A549 (cell line): ENCODE measurements at regions of chr18 and their contacts with region 1.

Region 1: GRCh38 chr18:3665780-3666525 is 216.0 kb downstream of the TGIF1 start:
- DNase-seq: peak; percentile 65 to 93
- ATAC-seq: peak; percentile 90 to 94
- H3K4me3 ChIP-seq: peak overlapping the region; percentile 14; the same call in 1 of the 3 replicates
- H3K27ac ChIP-seq: peak overlapping the region; percentile 87 to 91
- H3K4me1 ChIP-seq: peaks cover 50% of the 10 kb centered on the region
- CTCF ChIP-seq: peak; percentile 76
- EP300 ChIP-seq: peak; percentile 64 to 74; a peak in 4 of 5 replicates
- POLR2A ChIP-seq: no peak
- RAD21 ChIP-seq: peak; percentile 92 to 95

Region 2: DNA sequence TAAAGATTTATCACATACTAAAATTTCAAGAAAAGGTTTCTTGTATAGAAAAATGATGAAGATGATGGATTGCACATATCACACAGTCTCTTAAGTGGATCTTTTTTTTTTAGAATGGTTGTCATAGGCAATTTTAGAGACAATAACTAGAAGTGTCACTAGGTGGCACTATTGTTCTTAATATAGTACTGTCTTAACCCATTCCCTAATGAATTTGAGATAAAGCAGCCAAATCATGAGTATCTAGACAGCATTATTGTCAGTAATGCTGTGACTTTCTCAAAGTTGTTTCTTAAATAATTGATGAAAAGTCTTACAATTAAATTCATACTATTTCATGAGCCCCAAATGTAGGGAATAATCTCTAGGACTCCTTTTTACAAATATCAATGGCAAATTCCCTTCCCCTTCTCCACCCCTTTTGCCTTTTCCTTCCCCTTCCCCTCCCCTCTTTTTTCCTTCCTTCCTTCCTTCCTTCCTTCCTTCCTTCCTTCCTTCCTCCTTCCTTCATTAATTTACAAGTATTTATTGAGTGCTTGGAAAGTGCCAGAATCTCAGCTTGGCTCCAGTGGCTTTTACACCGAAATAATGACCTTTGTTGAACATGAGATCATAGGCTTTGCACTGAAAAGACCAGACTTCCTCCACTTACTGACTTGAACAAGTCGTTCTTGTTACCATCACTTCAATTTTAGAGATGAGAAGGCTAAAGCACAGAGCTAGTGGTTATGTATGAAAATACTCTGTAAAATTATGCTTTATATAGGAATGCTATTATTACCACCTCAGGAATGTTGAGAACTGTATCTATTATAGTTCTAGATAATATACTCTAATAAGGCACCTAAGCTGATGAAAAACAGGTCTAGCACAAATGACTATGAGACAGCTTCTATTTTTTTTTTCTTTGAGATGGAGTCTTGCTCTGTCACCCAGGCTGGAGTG is 384.2 kb before region 1 on chr18:
- CTCF ChIA-PET with region 1: interaction called, 26 read pairs
- POLR2A ChIA-PET with region 1: no interaction called
- DNase-seq: peak; percentile 55 to 78
- ATAC-seq: peak; percentile 54 to 83; a peak in 4 of 6 replicates
- H3K4me3 ChIP-seq: no peak overlapping the region
- H3K27ac ChIP-seq: peak overlapping the region; percentile 86 to 89
- H3K4me1 ChIP-seq: peaks cover 13% of the 10 kb centered on the region
- CTCF ChIP-seq: peak; percentile 64
- EP300 ChIP-seq: no peak
- POLR2A ChIP-seq: no peak
- RAD21 ChIP-seq: peak; percentile 84 to 86

Region 3: GRCh38 chr18:3466045-3466444 is 199.9 kb before region 1 on chr18:
- CTCF ChIA-PET with region 1: interaction called, 109 read pairs
- POLR2A ChIA-PET with region 1: interaction called, 4 read pairs
- DNase-seq: peak in 1 of 2 experiments; percentile 66
- ATAC-seq: peak; percentile 12 to 59; a peak in 4 of 6 replicates
- H3K4me3 ChIP-seq: no peak overlapping the region
- H3K27ac ChIP-seq: peak overlapping the region; percentile 55 to 63
- H3K4me1 ChIP-seq: peaks cover 49% of the 10 kb centered on the region
- CTCF ChIP-seq: no peak
- EP300 ChIP-seq: no peak
- POLR2A ChIP-seq: no peak
- RAD21 ChIP-seq: no peak

Region 4: DNA sequence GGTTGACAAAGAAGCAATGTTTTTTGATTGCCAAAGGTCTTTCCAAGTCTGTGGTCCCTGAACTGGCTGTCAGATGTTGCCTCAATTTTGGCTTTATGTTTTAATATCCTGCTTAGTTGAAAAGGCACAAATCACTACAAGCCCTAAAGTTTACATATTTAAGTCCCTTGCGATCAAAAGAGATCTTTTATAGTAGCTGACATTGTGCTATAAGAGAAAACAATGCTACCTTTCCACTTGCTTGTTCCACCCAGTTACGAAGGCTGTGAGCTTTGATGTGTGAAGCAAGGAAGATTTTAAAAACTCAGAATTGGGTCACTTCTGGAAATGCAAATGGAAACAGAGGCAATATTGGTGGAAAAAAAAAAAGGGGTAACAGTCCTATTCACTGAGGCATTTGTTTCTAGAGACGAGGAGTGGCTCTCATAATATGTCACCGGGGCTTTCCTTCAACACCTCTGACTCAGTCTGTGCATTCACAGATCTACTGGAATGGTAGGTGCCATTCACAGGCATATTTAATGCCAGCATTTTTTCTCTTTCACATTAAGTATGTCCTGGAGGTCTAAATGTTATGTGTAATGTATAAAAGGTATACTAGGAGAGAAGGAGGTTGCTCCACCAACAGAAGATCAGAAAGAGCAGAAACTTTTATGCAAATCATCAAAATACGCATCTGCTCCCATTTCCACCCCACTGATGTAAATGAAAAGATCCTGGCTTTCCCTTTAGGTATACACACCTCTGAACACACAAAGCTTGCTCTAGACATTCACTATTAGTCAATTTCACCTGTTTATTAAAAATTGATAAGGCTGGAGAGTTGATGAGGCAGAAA is 124.2 kb before region 1 on chr18:
- CTCF ChIA-PET with region 1: no interaction called
- POLR2A ChIA-PET with region 1: no interaction called
- DNase-seq: no peak
- ATAC-seq: no peak
- H3K4me3 ChIP-seq: no peak overlapping the region
- H3K27ac ChIP-seq: no peak overlapping the region
- H3K4me1 ChIP-seq: peaks cover 7% of the 10 kb centered on the region; the same call in 1 of the 3 replicates
- CTCF ChIP-seq: no peak
- EP300 ChIP-seq: no peak
- POLR2A ChIP-seq: no peak
- RAD21 ChIP-seq: no peak

Region 5: GRCh38 chr18:3593904-3594661 is 71.9 kb before region 1 on chr18:
- CTCF ChIA-PET with region 1: interaction called, 136 read pairs
- POLR2A ChIA-PET with region 1: interaction called, 75 read pairs
- DNase-seq: peak; percentile 81 to 97
- ATAC-seq: peak; percentile 81 to 91
- H3K4me3 ChIP-seq: peak overlapping the region; percentile 48
- H3K27ac ChIP-seq: peak overlapping the region; percentile 98 to 100
- H3K4me1 ChIP-seq: peaks cover 74% of the 10 kb centered on the region
- CTCF ChIP-seq: peak; percentile 67
- EP300 ChIP-seq: peak; percentile 75 to 79; a peak in 3 of 5 replicates
- POLR2A ChIP-seq: peak; percentile 12; the same call in 1 of the 2 replicates
- RAD21 ChIP-seq: peak; percentile 67 to 70

Region 6: DNA sequence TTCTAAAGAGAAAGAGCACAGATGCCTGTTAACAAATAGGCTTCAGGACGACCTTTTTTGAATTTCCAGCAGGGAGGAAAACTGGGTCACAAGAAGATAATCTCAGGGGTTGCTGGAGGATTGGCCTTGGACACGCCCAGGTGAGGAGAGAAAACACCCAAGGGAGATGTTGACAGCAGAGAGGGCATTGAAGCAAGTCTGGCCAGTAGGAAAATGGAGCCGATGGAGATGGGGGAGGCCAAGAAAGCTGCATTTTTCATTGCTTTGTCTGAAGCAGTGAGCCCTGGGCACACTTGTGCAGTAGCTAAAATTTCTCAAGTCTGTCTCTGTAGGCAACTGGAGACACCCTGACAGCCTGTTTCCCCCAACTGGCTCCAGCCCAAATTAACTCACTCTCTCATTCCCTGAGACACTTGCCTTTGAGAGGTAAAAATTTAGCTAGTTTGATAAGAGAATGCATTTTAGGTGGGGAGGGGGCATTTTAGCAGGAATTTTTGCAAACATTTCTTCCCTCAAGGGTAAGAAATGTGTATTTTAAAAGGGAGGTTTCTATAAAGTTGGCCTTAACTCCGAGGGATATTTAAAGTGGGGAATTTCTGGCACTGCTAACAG is 50.5 kb before region 1 on chr18:
- CTCF ChIA-PET with region 1: interaction called, 68 read pairs
- POLR2A ChIA-PET with region 1: interaction called, 69 read pairs
- DNase-seq: no peak
- ATAC-seq: no peak
- H3K4me3 ChIP-seq: no peak overlapping the region
- H3K27ac ChIP-seq: peak overlapping the region; percentile 99 to 100
- H3K4me1 ChIP-seq: peaks cover 42% of the 10 kb centered on the region
- CTCF ChIP-seq: no peak
- EP300 ChIP-seq: no peak
- POLR2A ChIP-seq: no peak
- RAD21 ChIP-seq: no peak

Region 7: DNA sequence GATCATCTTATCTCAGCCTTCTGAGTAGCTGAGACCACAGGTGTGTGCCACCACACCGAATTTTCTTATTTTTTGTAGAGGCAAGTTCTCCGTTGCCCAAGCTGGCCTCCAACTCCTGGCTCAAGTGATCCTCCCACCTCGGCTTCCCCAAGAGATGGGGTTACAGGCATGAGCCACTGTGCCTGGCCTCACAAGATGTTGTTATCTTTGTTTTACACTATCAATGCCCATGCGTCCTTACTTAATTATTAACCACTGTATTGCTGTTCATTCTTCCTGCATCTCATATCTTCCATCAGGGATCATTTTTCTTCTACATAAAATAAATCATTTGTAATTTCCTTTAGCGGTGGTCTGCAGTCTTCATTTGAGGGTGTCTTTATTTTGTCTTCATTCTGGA is 34.1 kb before region 1 on chr18:
- CTCF ChIA-PET with region 1: interaction called, 68 read pairs
- POLR2A ChIA-PET with region 1: interaction called, 4 read pairs
- DNase-seq: no peak
- ATAC-seq: no peak
- H3K4me3 ChIP-seq: no peak overlapping the region
- H3K27ac ChIP-seq: peak overlapping the region; percentile 38 to 86
- H3K4me1 ChIP-seq: peaks cover 33% of the 10 kb centered on the region
- CTCF ChIP-seq: no peak
- EP300 ChIP-seq: no peak
- POLR2A ChIP-seq: no peak
- RAD21 ChIP-seq: no peak

Region 8: GRCh38 chr18:3652380-3653262 is 13.3 kb before region 1 on chr18:
- CTCF ChIA-PET with region 1: interaction called, 61 read pairs
- POLR2A ChIA-PET with region 1: interaction called, 63 read pairs
- DNase-seq: peak; percentile 89 to 99
- ATAC-seq: peak; percentile 86 to 88
- H3K4me3 ChIP-seq: peak overlapping the region; percentile 51
- H3K27ac ChIP-seq: peak overlapping the region; percentile 99 to 100
- H3K4me1 ChIP-seq: peaks cover 63% of the 10 kb centered on the region
- CTCF ChIP-seq: no peak
- EP300 ChIP-seq: peak; percentile 60 to 88; a peak in 3 of 5 replicates
- POLR2A ChIP-seq: peak; percentile 29; the same call in 1 of the 2 replicates
- RAD21 ChIP-seq: peak in 1 of 2 experiments; percentile 5; a peak in 1 of 5 replicates

Region 9: DNA sequence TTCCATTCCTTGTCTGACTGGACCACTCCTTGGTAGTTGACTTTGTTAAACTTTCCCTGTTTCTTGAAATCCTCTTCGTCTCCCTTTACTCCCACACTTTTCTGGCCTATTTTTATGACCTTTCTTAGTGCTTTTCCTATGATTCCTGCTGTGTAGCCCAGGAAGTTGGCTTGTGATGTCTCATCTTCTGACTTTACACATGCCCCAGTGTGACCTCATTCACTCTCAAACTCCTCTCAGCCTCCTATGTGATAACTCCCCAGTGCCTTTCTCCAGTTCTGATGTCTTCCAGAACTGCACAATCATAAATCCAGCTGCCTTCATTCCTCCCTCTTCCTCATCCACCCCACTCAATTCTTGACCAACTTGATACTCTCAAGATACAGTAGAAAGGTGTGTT is 191.6 kb after region 1 on chr18:
- CTCF ChIA-PET with region 1: no interaction called
- POLR2A ChIA-PET with region 1: no interaction called
- DNase-seq: peak in 1 of 2 experiments; percentile 16
- ATAC-seq: no peak
- H3K4me3 ChIP-seq: no peak overlapping the region
- H3K27ac ChIP-seq: peak overlapping the region in 1 of 2 experiments; percentile 1; a peak in 2 of 6 replicates
- H3K4me1 ChIP-seq: peaks cover 9% of the 10 kb centered on the region; the same call in 1 of the 3 replicates
- CTCF ChIP-seq: no peak
- EP300 ChIP-seq: no peak
- POLR2A ChIP-seq: no peak
- RAD21 ChIP-seq: no peak

Region 10: DNA sequence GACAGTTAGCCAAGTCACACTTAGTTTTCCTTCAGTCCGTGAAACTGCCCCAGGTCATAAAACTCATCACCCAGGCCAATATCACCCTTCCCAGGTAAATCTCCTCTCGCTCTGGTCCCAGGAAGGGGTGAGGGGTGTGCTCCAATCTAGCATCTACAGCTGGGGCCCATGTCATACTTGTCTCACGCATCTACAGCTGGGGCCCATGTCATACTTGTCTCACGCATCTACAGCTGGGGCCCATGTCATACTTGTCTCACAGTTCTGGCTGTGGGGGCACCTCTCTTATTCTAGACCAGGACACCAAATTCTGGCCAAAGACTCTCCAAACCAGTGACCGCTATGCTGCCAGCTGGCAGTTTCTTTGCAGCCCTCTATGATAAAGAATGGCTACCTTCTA is 912.5 kb after region 1 on chr18:
- CTCF ChIA-PET with region 1: no interaction called
- POLR2A ChIA-PET with region 1: no interaction called
- DNase-seq: no peak
- ATAC-seq: no peak
- H3K4me3 ChIP-seq: no peak overlapping the region
- H3K27ac ChIP-seq: no peak overlapping the region
- H3K4me1 ChIP-seq: no peaks in the 10 kb centered on the region
- CTCF ChIP-seq: no peak
- EP300 ChIP-seq: no peak
- POLR2A ChIP-seq: no peak
- RAD21 ChIP-seq: no peak